ENCODE measurements at regions of chr4 and their contacts with region 1.

Region 1: DNA sequence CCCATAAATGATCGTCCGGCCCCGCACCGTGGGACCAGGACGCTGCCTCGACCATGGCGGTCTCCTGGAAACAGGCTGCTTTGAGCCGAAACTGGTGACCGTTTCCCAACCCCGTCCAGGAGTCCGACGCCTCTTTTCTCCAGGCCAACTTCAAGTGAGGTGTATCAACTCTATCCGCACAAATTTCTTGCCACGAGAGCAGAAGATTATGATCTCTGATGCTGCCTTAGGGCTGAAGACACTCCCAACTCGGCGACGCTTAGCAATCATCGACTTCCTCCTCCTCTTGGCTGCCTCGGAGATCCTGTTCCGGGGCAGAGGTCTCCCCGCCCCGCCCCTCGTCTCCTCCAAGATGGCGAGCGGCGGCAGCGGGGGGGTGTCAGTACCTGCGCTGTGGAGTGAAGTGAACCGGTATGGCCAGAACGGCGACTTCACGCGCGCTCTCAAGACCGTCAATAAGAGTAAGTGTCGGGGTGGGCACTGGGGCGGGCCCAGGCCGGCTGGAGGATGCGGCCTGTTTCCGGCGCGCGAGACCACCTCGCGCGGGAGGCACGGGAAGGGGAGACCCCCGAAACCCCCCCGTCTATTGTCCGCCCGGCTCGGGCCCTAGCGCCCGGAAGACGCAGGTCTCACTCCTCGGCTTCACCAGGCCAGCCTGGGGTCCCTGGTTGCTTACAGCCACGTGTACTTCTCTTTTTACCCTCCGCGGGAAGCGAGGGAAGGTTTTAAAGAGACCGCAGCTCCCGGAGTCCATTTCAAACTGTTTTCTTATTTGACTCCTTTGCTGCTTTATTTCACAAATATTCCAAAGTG is at the start of gene SRP72:
- DNase-seq: peak; percentile 91
- H3K4me3 ChIP-seq: peak within 1 kb of the TSS; percentile 67 to 99 (median 98)
- H3K27ac ChIP-seq: peak within 1 kb of the TSS; percentile 94
- H3K4me1 ChIP-seq: peaks cover 27% of the 10 kb centered on the region
- H3K27me3 ChIP-seq: no peaks in the 10 kb centered on the region
- CTCF ChIP-seq: no peak
- POLR2A ChIP-seq: peak; percentile 90
- total RNA-seq, gene SRP72: 132 and 145 TPM in 2 replicates

Region 2: DNA sequence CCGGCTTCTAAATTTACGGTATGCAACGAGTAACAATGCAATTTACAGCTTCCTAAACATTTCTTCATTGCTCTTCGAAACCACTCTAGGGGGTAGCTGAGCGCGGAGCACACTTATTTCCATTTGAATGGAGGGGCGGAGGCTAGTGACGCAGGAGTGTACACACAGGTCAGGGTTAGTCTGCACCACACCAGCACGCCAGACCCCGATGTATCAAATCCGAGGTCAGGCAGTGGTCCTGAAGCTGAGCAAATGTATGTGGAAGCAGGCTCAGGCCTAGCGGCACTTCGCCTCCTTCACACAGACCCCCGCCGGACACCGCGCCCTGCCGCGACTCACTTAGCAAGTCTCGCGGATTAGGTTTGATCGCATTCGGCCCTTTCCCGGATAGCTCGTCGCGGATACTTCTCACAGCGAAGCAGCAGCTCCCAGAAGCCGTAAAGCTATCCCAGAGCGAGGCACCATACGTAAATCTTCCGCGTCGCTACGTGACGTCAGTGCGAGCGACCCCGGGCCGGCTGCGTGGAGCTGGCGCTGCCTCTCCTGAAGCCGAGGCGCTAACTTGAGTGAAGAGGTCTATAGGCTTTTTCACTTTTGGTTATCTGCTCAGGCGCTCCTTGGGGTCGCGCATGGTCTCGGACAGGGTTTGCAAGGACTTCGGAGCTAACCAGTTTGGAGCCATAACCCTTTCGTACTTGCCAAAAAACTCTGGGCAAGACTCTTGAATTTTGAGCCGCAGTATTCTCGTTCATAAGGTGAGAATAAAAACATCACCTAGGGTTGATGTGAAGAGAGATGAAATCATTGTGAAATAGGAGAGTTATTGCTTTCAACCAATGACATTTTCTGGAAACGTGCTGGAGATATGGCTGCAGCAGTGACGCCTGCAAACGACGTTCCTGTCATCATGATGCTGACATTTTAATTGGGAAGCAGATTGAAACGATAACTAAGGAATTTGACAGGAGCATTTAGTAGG is 80.2 kb before region 1 on chr4 and contains the start of gene AASDH:
- CTCF ChIA-PET with region 1: no interaction called
- POLR2A ChIA-PET with region 1: interaction called, 3 read pairs
- dilution Hi-C with region 1: no loop called
- intact Hi-C with region 1: loop called (anchors 1 kb)
- DNase-seq: peak; percentile 98
- H3K4me3 ChIP-seq: peak within 1 kb of the TSS; percentile 67 to 92 (median 91)
- H3K27ac ChIP-seq: peak within 1 kb of the TSS; percentile 73
- H3K4me1 ChIP-seq: peaks cover 13% of the 10 kb centered on the region
- H3K27me3 ChIP-seq: no peaks in the 10 kb centered on the region
- CTCF ChIP-seq: no peak
- POLR2A ChIP-seq: peak; percentile 84
- total RNA-seq, gene AASDH: 6.9 and 9.5 TPM in 2 replicates

Region 3: DNA sequence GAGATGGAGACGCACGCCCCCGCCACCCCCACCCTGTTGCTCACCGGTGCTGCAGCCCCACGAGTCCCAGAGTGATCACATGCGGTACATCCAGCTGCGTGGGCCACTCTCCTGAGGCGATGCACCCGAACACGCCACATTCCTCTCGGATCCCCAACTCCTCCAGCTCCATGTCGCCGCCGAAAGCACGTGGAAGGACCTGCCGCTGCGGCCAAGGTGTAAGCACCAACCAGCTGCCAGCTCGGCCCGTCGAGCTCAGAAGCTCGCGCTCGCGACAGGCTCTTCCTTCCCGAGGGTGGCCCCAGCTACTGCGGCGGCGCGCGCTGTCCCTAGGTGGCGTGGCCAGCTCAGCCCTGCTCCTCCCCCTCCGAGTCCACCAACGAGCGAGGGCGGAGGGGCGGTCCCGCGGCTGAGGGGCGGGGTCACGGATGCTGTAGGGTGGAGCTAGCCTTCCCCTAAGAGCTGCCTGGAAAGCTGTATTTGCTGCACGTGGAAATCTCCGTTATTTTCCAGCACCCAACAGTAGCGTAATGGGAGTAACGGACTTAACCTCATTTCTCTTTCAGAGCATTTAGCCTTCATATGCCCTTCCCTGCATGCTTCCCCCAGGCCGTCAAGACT is 32.1 kb before region 1 on chr4 and contains the start of gene PPAT:
- CTCF ChIA-PET with region 1: interaction called, 5 read pairs
- POLR2A ChIA-PET with region 1: interaction called, 3 read pairs
- dilution Hi-C with region 1: no loop called
- intact Hi-C with region 1: loop called (anchors 1 kb)
- DNase-seq: peak; percentile 100
- H3K4me3 ChIP-seq: peak within 1 kb of the TSS; percentile 77 to 86 (median 83)
- H3K27ac ChIP-seq: peak within 1 kb of the TSS; percentile 87
- H3K4me1 ChIP-seq: peaks cover 19% of the 10 kb centered on the region
- H3K27me3 ChIP-seq: no peaks in the 10 kb centered on the region
- CTCF ChIP-seq: peak in 1 of 2 donors; percentile 25
- POLR2A ChIP-seq: peak; percentile 83
- total RNA-seq, gene PPAT: 21.8 and 25.5 TPM in 2 replicates

Region 4: DNA sequence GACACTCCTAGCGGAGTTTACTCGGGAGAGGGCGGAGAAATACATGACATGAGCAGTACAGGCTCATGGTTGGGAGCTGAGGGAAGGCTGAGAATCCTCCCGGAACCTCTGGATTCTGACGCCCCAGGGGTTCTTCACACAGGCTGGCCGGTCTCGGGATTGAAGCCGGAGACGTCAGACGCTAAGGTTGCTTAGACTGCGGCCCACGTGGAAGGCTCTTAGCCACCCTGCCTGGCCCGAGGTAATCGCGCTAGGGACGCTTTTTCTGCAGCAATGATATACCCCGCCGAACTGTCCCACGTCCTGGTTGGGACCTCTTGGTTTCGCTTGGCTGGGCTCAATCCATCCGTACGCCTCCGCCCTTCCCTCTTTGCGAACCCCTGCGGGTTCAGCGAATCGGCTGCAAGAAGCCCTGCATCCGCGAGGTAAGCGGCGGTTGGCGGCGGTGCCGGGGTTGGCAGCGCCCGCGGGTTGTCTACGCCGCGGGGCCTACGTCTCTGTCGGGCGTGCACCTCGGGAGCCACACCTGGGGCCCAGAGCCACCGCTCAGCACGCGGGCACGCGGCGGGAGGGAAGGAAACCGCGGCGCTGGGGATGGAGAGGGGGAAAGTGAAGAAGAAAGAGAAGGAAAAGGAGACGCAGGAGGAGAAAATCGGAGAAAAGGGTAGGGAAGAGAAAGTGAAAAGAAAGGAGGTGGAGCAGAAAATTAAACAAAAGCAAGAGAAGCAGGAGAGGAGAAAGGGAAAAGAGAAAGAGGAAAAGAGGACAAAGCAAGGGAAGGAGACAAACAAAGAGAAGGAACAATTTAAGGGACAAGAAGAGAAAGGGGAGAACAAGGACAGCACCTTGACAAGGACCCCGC is 38.0 kb after region 1 on chr4 and contains the start of gene ARL9:
- CTCF ChIA-PET with region 1: no interaction called
- POLR2A ChIA-PET with region 1: interaction called, 4 read pairs
- dilution Hi-C with region 1: no loop called
- intact Hi-C with region 1: loop called (anchors 2 kb)
- DNase-seq: peak; percentile 61
- H3K4me3 ChIP-seq: peak within 1 kb of the TSS; percentile 48 to 69 (median 67)
- H3K27ac ChIP-seq: no peak within 1 kb of the TSS
- H3K4me1 ChIP-seq: peaks cover 13% of the 10 kb centered on the region
- H3K27me3 ChIP-seq: no peaks in the 10 kb centered on the region
- CTCF ChIP-seq: no peak
- POLR2A ChIP-seq: no peak
- total RNA-seq, gene ARL9: 0.51 and 1.1 TPM in 2 replicates